ENCODE measurements at regions of chr2 and their contacts with region 1.

Region 1: GRCh38 chr2:234446404-234447076 is 50.3 kb downstream of the ARL4C start:
- DNase-seq: peak; percentile 96
- H3K4me3 ChIP-seq: peak overlapping the region in 1 of 3 experiments; percentile 5
- H3K27ac ChIP-seq: peak overlapping the region; percentile 79
- H3K4me1 ChIP-seq: peaks cover 34% of the 10 kb centered on the region
- H3K27me3 ChIP-seq: no peaks in the 10 kb centered on the region
- CTCF ChIP-seq: no peak

Region 2: DNA sequence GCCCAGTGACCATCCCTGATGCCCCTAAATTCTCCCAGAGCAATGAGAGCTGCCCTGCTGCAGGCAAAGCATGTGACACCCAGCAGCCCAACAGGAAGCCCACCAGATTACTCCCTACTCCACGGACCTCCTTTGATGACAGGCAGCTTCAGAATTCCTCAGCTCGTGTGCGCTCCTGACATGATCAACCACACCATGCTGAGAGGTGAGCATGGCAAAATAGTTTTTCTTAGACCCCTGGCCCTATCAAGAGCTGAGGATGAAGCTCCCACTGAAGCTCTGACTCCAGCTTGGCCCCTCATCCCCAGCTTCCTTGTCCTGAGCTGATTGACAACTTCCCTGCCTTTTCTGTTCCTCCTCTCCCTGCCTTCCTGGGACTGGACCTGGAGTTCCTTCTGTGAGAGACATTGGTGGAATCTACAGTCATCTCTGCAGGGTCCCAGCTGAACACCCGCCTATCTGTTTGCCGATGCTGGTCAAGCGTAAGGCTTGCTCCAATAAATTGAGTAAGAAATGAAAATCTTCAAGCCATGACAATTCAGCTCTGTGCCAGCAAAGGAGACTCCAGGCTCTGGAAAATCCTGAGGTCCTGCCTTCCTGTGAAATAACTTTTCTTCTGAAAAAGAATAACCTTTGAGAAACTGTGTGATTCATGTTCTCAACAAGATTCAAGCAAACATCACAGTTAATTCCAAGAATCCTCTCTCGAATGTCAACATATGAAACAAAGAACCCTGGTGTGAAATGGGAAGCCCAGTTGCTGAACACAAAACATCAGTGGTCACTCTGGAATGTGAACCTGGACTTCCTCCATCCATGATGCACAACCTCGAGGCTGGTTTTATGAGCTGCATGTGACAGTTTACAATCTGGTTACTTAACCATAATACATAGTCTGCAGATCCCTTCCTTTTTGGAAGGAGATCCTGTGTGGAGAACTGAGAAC is 194.9 kb before region 1 on chr2:
- CTCF ChIA-PET with region 1: no interaction called
- dilution Hi-C with region 1: loop called (anchors 5 kb)
- in situ Hi-C with region 1: no loop called
- intact Hi-C with region 1: no loop called
- DNase-seq: peak; percentile 99
- H3K4me3 ChIP-seq: no peak overlapping the region
- H3K27ac ChIP-seq: peak overlapping the region; percentile 98
- H3K4me1 ChIP-seq: peaks cover 71% of the 10 kb centered on the region
- H3K27me3 ChIP-seq: no peaks in the 10 kb centered on the region
- CTCF ChIP-seq: no peak

Region 3: DNA sequence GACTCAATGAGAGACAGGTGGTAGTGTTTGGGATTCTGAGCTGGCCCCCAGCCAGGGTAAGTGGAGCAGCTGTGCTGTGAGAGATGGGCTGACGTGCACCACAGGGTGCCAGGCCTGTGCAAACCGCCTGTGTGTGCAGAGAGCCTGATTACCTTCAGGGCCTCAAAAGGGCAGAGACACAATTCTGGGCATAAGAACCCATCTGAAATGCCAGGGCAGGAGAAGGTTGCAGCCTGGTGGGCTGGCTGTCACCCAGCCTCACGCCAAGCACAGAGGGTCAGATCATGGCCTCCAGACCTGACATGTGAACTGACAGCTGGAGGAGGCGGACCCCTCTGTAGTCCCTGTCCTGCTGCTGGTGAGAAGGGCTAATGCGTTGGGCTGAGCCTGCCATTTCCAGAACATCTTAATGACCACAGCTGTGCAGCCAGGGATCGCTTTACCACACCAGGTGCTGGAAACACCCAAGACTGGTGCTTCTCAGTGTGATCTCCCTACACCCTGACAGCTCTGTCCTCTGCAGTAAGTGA is 50.6 kb before region 1 on chr2:
- CTCF ChIA-PET with region 1: no interaction called
- dilution Hi-C with region 1: no loop called
- in situ Hi-C with region 1: no loop called
- intact Hi-C with region 1: no loop called
- DNase-seq: no peak
- H3K4me3 ChIP-seq: no peak overlapping the region
- H3K27ac ChIP-seq: no peak overlapping the region
- H3K4me1 ChIP-seq: no peaks in the 10 kb centered on the region
- H3K27me3 ChIP-seq: no peaks in the 10 kb centered on the region
- CTCF ChIP-seq: no peak

Region 4: DNA sequence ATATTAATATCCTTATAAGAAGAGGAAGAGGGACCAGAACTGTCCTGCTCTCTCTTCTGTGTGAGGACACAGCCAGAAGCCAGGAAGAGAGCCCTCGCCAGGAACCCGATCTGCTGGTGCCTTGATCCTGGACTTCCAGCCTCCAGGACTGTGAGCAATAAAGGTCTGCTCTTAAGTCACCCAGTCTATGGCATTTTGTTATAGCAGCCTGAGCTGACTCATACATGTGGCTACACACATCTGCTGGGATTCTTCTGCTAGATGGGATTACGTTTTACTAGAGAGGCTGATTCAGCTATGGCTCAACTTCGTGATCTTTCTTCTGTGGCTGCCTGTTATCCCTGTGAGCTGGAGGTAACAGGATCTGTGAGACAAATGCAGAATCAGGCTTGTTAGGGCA is 20.7 kb after region 1 on chr2:
- CTCF ChIA-PET with region 1: no interaction called
- dilution Hi-C with region 1: no loop called
- in situ Hi-C with region 1: no loop called
- intact Hi-C with region 1: no loop called
- DNase-seq: peak; percentile 82
- H3K4me3 ChIP-seq: no peak overlapping the region
- H3K27ac ChIP-seq: peak overlapping the region; percentile 14
- H3K4me1 ChIP-seq: peaks cover 22% of the 10 kb centered on the region
- H3K27me3 ChIP-seq: no peaks in the 10 kb centered on the region
- CTCF ChIP-seq: no peak